ENCODE measurements at regions of chr13 and their contacts with region 1.

Region 1: DNA sequence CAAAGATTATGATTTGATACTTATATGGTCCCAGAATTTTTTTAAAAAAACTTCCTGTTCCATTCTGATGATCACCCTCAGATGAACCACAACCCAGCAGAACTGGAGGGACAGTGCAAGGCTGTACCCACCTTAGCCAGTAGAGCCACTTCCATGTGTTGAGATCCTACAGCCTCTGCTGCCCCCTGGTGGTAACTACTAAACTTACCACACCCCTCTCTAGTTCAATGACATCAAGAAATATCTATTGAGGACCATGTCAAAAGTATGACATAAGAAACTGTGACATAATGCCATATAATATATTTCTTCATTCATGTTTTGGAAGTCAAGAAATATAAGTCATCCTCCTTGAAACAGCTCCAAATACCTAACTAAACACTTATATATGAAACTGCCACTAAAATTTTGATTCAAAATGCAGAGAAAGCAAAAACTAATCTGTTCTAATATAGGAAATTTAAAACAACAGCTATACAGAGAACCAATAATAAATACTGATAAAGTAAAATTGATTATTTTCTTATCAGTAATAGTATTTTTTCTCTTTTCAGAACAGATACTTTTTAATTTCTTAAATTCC is 412.6 kb downstream of the KCTD12 start:
- DNase-seq: peak; percentile 55
- H3K4me3 Mint-ChIP-seq: no peak overlapping the region
- H3K27ac Mint-ChIP-seq: no peak overlapping the region
- H3K4me1 Mint-ChIP-seq: no peaks in the 10 kb centered on the region
- H3K27me3 Mint-ChIP-seq: no peaks in the 10 kb centered on the region
- CTCF ChIP-seq: peak; percentile 34

Region 2: GRCh38 chr13:75675421-75675820 is 798.2 kb before region 1 on chr13:
- CTCF ChIA-PET with region 1: no interaction called
- intact Hi-C with region 1: loop called (anchors 10 kb)
- DNase-seq: no peak
- H3K4me3 Mint-ChIP-seq: no peak overlapping the region
- H3K27ac Mint-ChIP-seq: no peak overlapping the region
- H3K4me1 Mint-ChIP-seq: no peaks in the 10 kb centered on the region
- H3K27me3 Mint-ChIP-seq: no peaks in the 10 kb centered on the region
- CTCF ChIP-seq: no peak

Region 3: GRCh38 chr13:75876360-75877050 is 597.1 kb before region 1 on chr13:
- CTCF ChIA-PET with region 1: no interaction called
- intact Hi-C with region 1: loop called (anchors 1 kb)
- DNase-seq: peak; percentile 17
- H3K4me3 Mint-ChIP-seq: no peak overlapping the region
- H3K27ac Mint-ChIP-seq: no peak overlapping the region
- H3K4me1 Mint-ChIP-seq: peaks cover 7% of the 10 kb centered on the region
- H3K27me3 Mint-ChIP-seq: no peaks in the 10 kb centered on the region
- CTCF ChIP-seq: no peak

Region 4: DNA sequence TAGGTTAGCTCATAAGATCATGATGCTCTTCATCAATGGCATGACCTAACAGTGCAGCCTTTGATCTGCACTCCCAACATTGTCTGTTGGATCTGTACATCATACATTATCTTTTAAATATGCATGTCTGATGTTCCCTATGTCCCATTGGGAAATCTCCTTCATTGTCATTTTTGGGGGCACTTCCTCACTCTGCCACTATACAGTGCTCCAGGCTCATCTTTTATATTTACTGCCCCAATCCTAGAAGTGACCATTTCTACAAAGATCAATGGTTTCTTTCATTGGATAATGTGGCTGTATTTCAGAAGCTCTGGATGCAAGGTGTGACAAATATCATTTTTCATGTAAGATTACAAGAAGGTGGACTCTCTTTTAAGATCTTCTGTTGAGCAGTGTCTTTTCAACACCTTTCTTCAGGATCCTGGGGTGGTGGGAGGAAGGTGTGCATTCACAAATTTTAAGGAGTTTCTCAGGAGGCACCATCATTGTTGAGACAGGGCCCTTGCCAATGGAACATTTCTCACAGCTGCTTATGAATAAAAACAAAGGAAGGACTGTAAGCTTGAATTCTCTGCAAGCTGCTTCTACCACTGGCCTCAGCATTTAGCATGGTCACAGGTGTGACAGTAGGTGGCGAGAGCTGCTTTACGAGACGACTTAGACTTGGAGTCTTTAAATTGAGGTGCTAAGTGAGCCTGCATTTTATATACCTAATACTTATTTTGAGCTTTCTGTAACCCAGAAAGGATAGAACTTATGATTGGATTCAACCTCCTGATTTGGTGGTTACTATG is 434.5 kb before region 1 on chr13:
- CTCF ChIA-PET with region 1: no interaction called
- intact Hi-C with region 1: loop called (anchors 5 kb)
- DNase-seq: peak; percentile 1
- H3K4me3 Mint-ChIP-seq: no peak overlapping the region
- H3K27ac Mint-ChIP-seq: no peak overlapping the region
- H3K4me1 Mint-ChIP-seq: no peaks in the 10 kb centered on the region
- H3K27me3 Mint-ChIP-seq: no peaks in the 10 kb centered on the region
- CTCF ChIP-seq: no peak

Measured in Calu3 (cell line).